CD8-positive, alpha-beta T cell (primary cell): ENCODE measurements at regions of chr16 and their contacts with region 1.

Region 1: DNA sequence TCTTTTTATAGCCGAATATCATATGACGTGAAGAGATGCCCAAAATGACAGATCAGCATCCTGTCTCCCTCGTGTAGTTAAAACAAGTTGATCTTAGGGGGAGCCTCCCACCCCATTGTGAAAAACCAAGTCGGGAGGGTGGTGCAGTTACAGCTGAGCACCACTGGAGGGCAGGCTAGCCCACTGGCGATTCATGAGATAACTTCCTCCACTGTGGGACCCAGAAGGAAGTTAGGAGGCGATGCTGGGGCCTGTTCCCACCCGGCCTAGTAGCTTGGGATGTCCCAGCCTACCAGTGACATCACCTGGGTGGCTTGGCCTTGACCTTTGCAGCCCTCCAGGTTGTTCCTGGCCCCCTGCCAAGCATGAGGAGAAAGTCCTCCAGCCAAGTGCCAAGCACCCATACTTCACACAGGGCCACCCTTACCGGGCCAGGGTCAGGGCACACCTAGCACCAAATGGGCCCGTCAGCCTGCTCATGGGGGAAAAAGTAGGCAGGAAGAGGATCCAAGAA is 8.1 kb upstream of the CPNE2 start:
- DNase-seq: peak; percentile 58 to 92 (median 80)
- ATAC-seq: peak; percentile 98
- H3K4me3 ChIP-seq: no peak overlapping the region
- H3K4me3 Mint-ChIP-seq: no peak overlapping the region
- H3K27ac ChIP-seq: peak overlapping the region; percentile 59 to 69
- H3K27ac Mint-ChIP-seq: peak overlapping the region; percentile 92
- H3K4me1 ChIP-seq: peaks cover 11% of the 10 kb centered on the region
- H3K4me1 Mint-ChIP-seq: peaks cover 14% of the 10 kb centered on the region
- H3K27me3 ChIP-seq: no peaks in the 10 kb centered on the region
- H3K27me3 Mint-ChIP-seq: no peaks in the 10 kb centered on the region
- CTCF ChIP-seq: peak; percentile 96

Region 2: DNA sequence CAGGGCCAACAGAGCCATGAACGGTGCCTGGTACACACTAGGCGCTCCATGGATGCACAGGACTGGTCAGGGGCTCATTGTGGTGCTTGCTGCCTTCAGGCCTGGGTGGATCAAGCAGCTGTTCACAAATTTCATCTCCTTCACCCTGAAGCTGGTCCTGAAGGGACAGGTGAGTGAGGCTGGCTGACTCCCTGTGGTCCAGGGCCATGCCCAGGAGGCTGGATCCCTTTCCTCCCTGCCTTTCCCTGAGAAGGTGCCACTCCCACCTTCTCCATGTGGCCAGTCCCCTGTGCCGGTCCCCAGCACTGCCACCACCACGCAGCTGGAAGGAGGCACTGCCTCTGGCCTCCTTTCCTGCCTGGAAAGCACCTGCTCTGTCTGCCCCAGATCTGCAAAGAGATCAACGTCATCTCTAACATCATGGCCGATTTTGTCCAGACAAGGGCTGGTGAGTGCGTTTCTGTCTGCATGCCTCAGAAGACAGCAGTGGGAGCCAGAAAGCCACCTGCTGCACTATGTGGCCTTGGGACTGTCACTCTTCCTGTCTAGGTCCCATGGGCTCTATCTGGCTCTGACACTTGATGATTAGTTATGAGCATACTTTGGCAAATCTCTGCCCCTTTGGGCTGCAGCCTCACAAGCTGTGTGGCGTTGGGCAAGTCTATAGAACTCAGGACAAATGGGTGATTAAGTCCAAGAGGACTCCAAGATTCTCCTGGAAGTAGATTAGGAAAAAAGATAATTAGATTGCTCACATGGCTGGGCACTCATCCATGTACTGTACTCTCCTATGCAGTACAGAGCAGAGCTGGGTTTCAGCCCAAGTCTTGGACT is 113.2 kb before region 1 on chr16:
- CTCF ChIA-PET with region 1: interaction called, 79 read pairs
- POLR2A ChIA-PET with region 1: no interaction called
- intact Hi-C with region 1: no loop called
- DNase-seq: peak in 2 of 9 experiments; percentile 28 to 39
- ATAC-seq: peak; percentile 48
- H3K4me3 ChIP-seq: no peak overlapping the region
- H3K4me3 Mint-ChIP-seq: no peak overlapping the region
- H3K27ac ChIP-seq: no peak overlapping the region
- H3K27ac Mint-ChIP-seq: peak overlapping the region; percentile 63
- H3K4me1 ChIP-seq: peaks cover 53% of the 10 kb centered on the region
- H3K4me1 Mint-ChIP-seq: peaks cover 46% of the 10 kb centered on the region
- H3K27me3 ChIP-seq: no peaks in the 10 kb centered on the region
- H3K27me3 Mint-ChIP-seq: no peaks in the 10 kb centered on the region
- CTCF ChIP-seq: no peak

Region 3: DNA sequence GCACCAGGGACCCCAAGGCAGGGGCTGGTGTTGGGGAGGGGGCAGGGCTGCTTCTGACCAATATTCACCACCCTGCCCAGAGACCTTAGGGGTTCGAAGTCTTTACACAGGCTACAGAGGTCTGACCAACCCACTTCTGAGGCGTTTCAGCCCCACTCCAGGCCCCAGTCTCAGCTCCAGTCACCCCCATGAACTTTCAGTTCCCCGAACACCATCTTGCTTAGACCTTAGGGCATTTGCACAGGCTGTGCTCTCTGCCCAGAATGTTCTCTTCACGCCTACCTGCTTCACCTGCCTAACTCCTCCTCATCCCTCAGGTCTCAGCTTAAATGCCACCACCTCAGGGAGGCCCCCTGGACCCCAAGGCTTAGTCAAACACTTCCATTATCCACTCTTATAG is 17.7 kb before region 1 on chr16:
- CTCF ChIA-PET with region 1: interaction called, 23 read pairs
- POLR2A ChIA-PET with region 1: interaction called, 5 read pairs
- intact Hi-C with region 1: no loop called
- DNase-seq: no peak
- ATAC-seq: no peak
- H3K4me3 ChIP-seq: no peak overlapping the region
- H3K4me3 Mint-ChIP-seq: no peak overlapping the region
- H3K27ac ChIP-seq: no peak overlapping the region
- H3K27ac Mint-ChIP-seq: peak overlapping the region; percentile 80
- H3K4me1 ChIP-seq: peaks cover 9% of the 10 kb centered on the region
- H3K4me1 Mint-ChIP-seq: peaks cover 19% of the 10 kb centered on the region
- H3K27me3 ChIP-seq: no peaks in the 10 kb centered on the region
- H3K27me3 Mint-ChIP-seq: no peaks in the 10 kb centered on the region
- CTCF ChIP-seq: no peak

Region 4: GRCh38 chr16:57106767-57107166 is 22.5 kb after region 1 on chr16:
- CTCF ChIA-PET with region 1: interaction called, 20 read pairs
- POLR2A ChIA-PET with region 1: no interaction called
- intact Hi-C with region 1: no loop called
- DNase-seq: no peak
- ATAC-seq: no peak
- H3K4me3 ChIP-seq: no peak overlapping the region
- H3K4me3 Mint-ChIP-seq: no peak overlapping the region
- H3K27ac ChIP-seq: no peak overlapping the region
- H3K27ac Mint-ChIP-seq: no peak overlapping the region
- H3K4me1 ChIP-seq: peaks cover 5% of the 10 kb centered on the region
- H3K4me1 Mint-ChIP-seq: peaks cover 11% of the 10 kb centered on the region
- H3K27me3 ChIP-seq: no peaks in the 10 kb centered on the region
- H3K27me3 Mint-ChIP-seq: no peaks in the 10 kb centered on the region
- CTCF ChIP-seq: no peak

Region 5: GRCh38 chr16:57141822-57142631 is 57.7 kb after region 1 on chr16:
- CTCF ChIA-PET with region 1: interaction called, 16 read pairs
- POLR2A ChIA-PET with region 1: interaction called, 4 read pairs
- intact Hi-C with region 1: no loop called
- DNase-seq: peak in 5 of 9 experiments; percentile 29 to 58 (median 38)
- ATAC-seq: peak; percentile 91
- H3K4me3 ChIP-seq: peak overlapping the region in 1 of 2 experiments; percentile 3
- H3K4me3 Mint-ChIP-seq: peak overlapping the region; percentile 75
- H3K27ac ChIP-seq: peak overlapping the region; percentile 19 to 42
- H3K27ac Mint-ChIP-seq: peak overlapping the region; percentile 98
- H3K4me1 ChIP-seq: peaks cover 56% of the 10 kb centered on the region
- H3K4me1 Mint-ChIP-seq: peaks cover 68% of the 10 kb centered on the region
- H3K27me3 ChIP-seq: no peaks in the 10 kb centered on the region
- H3K27me3 Mint-ChIP-seq: no peaks in the 10 kb centered on the region
- CTCF ChIP-seq: no peak

Region 6: DNA sequence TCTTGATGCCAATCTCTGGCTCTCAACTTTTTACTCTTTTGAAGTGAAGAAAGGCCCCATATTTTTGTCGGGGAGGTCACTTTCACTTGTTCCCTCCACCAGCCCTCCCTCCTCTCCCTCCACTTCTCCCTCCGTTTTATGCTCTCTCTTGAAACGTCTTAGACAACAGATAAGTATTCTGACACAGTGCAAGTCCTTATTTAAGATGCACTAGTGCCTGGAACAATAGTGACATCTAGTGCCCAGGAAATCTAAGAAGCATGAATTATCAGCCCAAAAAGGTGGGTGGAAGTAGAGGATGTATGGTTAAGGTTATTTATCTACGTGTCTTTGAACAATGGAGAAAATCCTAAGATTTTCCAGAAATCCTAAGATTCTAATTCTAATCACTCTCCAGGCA is 83.6 kb after region 1 on chr16:
- CTCF ChIA-PET with region 1: interaction called, 91 read pairs
- POLR2A ChIA-PET with region 1: interaction called, 4 read pairs
- intact Hi-C with region 1: loop called (anchors 1 kb)
- DNase-seq: peak in 3 of 9 experiments; percentile 21 to 85 (median 76)
- ATAC-seq: peak; percentile 99
- H3K4me3 ChIP-seq: no peak overlapping the region
- H3K4me3 Mint-ChIP-seq: no peak overlapping the region
- H3K27ac ChIP-seq: no peak overlapping the region
- H3K27ac Mint-ChIP-seq: no peak overlapping the region
- H3K4me1 ChIP-seq: no peaks in the 10 kb centered on the region
- H3K4me1 Mint-ChIP-seq: peaks cover 9% of the 10 kb centered on the region
- H3K27me3 ChIP-seq: no peaks in the 10 kb centered on the region
- H3K27me3 Mint-ChIP-seq: no peaks in the 10 kb centered on the region
- CTCF ChIP-seq: peak; percentile 70

Region 7: DNA sequence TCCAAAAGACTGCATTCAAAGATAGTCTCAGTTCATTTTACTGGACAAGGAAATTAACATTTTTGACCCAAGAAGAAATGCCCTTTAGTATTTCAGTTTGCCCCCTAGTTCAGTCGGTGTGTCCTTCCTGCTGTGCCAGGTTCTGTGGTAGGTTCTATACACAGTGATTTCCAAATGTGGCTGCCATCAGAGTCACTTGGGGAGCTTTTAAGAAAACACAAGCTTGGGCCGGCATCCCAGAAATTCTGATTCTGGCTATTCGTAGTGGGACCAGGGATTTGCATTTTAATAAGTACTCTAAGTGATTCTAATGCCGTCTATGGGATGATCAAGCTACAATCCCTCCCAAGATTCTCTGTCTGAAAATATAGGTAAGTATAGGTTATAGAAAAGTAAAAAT is 112.0 kb after region 1 on chr16:
- CTCF ChIA-PET with region 1: no interaction called
- POLR2A ChIA-PET with region 1: no interaction called
- intact Hi-C with region 1: no loop called
- DNase-seq: no peak
- ATAC-seq: no peak
- H3K4me3 ChIP-seq: no peak overlapping the region
- H3K4me3 Mint-ChIP-seq: no peak overlapping the region
- H3K27ac ChIP-seq: no peak overlapping the region
- H3K27ac Mint-ChIP-seq: no peak overlapping the region
- H3K4me1 ChIP-seq: peaks cover 7% of the 10 kb centered on the region
- H3K4me1 Mint-ChIP-seq: peaks cover 36% of the 10 kb centered on the region
- H3K27me3 ChIP-seq: no peaks in the 10 kb centered on the region
- H3K27me3 Mint-ChIP-seq: no peaks in the 10 kb centered on the region
- CTCF ChIP-seq: no peak